SK-N-SH (cell line): ENCODE measurements at regions of chr2 and their contacts with region 1.

Region 1: GRCh38 chr2:215269397-215270119 is 42.3 kb upstream of the ATIC start:
- DNase-seq: peak; percentile 64
- H3K4me3 ChIP-seq: peak overlapping the region in 1 of 2 experiments; percentile 41; a peak in 1 of 4 replicates
- H3K27ac ChIP-seq: no peak overlapping the region
- H3K4me1 ChIP-seq: peaks cover 0 to 7% of the 10 kb centered on the region in 2 experiments; a peak in 2 of 4 replicates
- H3K27me3 ChIP-seq: no peaks in the 10 kb centered on the region
- CTCF ChIP-seq: peak; percentile 94
- EP300 ChIP-seq: no peak
- RAD21 ChIP-seq: peak; percentile 90

Region 2: GRCh38 chr2:214960677-214961076 is 308.9 kb before region 1 on chr2:
- CTCF ChIA-PET with region 1: interaction called, 17 read pairs
- POLR2A ChIA-PET with region 1: no interaction called
- DNase-seq: no peak
- H3K4me3 ChIP-seq: no peak overlapping the region
- H3K27ac ChIP-seq: no peak overlapping the region
- H3K4me1 ChIP-seq: no peaks in the 10 kb centered on the region; a peak in 1 of 4 replicates
- H3K27me3 ChIP-seq: no peaks in the 10 kb centered on the region
- CTCF ChIP-seq: peak; percentile 62
- EP300 ChIP-seq: no peak
- RAD21 ChIP-seq: peak; percentile 68